MCF 10A (cell line): ENCODE measurements at regions of chr22 and their contacts with region 1.

Region 1: GRCh38 chr22:22463855-22464540 is 44.5 kb downstream of the ZNF280B start:
- DNase-seq: peak; percentile 71
- H3K4me3 Mint-ChIP-seq: no peak overlapping the region
- H3K27ac Mint-ChIP-seq: no peak overlapping the region
- H3K4me1 Mint-ChIP-seq: peaks cover 3% of the 10 kb centered on the region
- H3K27me3 Mint-ChIP-seq: peaks cover 36% of the 10 kb centered on the region
- CTCF ChIP-seq: peak; percentile 69

Region 2: DNA sequence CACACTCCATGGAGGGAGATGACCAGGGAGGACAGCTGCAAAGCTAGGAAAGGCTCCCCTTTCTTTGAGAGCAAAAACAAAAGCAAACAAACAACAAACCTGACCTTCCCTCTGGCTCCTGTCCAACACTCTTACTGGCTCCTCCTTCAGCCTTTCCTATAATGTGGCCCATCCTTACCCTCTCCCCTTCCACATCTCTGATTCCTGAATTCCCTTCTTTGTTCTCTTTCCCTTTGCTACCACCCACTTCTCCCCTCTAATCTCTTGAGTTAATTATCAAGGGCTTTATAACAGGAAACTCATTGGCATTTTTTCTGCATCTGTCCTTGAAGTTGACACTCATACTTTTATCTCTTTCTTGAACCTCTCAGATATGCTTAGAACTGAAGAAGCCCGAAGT is 11.8 kb before region 1 on chr22:
- CTCF ChIA-PET with region 1: interaction called, 10 read pairs
- POLR2A ChIA-PET with region 1: no interaction called
- intact Hi-C with region 1: no loop called
- DNase-seq: no peak
- H3K4me3 Mint-ChIP-seq: no peak overlapping the region
- H3K27ac Mint-ChIP-seq: no peak overlapping the region
- H3K4me1 Mint-ChIP-seq: no peaks in the 10 kb centered on the region
- H3K27me3 Mint-ChIP-seq: peaks cover 69% of the 10 kb centered on the region
- CTCF ChIP-seq: no peak

Region 3: GRCh38 chr22:22474733-22475132 is 10.7 kb after region 1 on chr22:
- CTCF ChIA-PET with region 1: interaction called, 27 read pairs
- POLR2A ChIA-PET with region 1: no interaction called
- intact Hi-C with region 1: no loop called
- DNase-seq: no peak
- H3K4me3 Mint-ChIP-seq: no peak overlapping the region
- H3K27ac Mint-ChIP-seq: no peak overlapping the region
- H3K4me1 Mint-ChIP-seq: no peaks in the 10 kb centered on the region
- H3K27me3 Mint-ChIP-seq: no peaks in the 10 kb centered on the region
- CTCF ChIP-seq: no peak